ENCODE measurements at regions of chr7 and their contacts with region 1.

Region 1: GRCh38 chr7:30594549-30595435 is at the start of gene GARS1:
- DNase-seq: peak; percentile 81 to 95 (median 89)
- ATAC-seq: peak; percentile 83
- H3K4me3 ChIP-seq: peak within 1 kb of the TSS; percentile 72 to 87
- H3K4me3 Mint-ChIP-seq: peak within 1 kb of the TSS; percentile 99
- H3K27ac ChIP-seq: peak within 1 kb of the TSS; percentile 90 to 93
- H3K27ac Mint-ChIP-seq: peak within 1 kb of the TSS; percentile 99
- H3K4me1 ChIP-seq: peaks cover 36% of the 10 kb centered on the region
- H3K4me1 Mint-ChIP-seq: peaks cover 73% of the 10 kb centered on the region
- H3K27me3 ChIP-seq: no peaks in the 10 kb centered on the region
- H3K27me3 Mint-ChIP-seq: no peaks in the 10 kb centered on the region
- CTCF ChIP-seq: no peak
- total RNA-seq, gene GARS1: 119 to 121 TPM

Region 2: DNA sequence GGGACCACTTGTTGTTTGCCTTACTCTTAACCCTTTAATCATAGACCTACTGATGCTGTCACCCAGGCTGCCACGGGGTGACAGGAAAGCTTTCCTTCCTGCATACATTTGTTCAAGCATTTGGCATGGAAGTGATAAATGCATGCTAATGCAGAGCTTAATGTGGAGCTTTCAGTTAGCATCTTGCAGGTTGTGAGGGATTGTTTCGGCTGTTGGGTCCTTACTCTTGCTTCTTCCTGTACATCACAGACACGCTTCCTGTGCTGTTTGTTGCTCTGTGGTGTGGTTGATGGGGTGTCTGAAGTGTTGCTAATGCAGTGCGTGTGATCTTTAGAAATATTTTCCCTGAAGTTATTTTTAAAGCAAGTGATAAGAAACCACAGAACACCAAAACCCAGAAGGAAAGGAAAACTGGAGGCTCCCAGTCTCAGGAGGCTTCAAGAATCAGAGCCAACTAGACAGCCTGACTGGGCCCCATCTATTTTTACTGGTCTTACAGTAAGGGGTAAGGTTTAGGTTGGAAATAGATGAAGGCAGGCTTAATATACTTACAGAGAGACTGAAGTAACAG is 1257.2 kb before region 1 on chr7:
- CTCF ChIA-PET with region 1: no interaction called
- POLR2A ChIA-PET with region 1: interaction called, 4 read pairs
- intact Hi-C with region 1: loop called in 1 of 2 experiments (anchors 5 kb)
- DNase-seq: peak; percentile 19 to 87 (median 50)
- ATAC-seq: peak; percentile 91
- H3K4me3 ChIP-seq: peak overlapping the region in 1 of 2 experiments; percentile 16
- H3K4me3 Mint-ChIP-seq: peak overlapping the region; percentile 64
- H3K27ac ChIP-seq: peak overlapping the region; percentile 30 to 53
- H3K27ac Mint-ChIP-seq: peak overlapping the region; percentile 83
- H3K4me1 ChIP-seq: peaks cover 30% of the 10 kb centered on the region
- H3K4me1 Mint-ChIP-seq: peaks cover 49% of the 10 kb centered on the region
- H3K27me3 ChIP-seq: no peaks in the 10 kb centered on the region
- H3K27me3 Mint-ChIP-seq: no peaks in the 10 kb centered on the region
- CTCF ChIP-seq: no peak

Region 3: GRCh38 chr7:30080818-30081217 is 514.0 kb before region 1 on chr7:
- CTCF ChIA-PET with region 1: no interaction called
- POLR2A ChIA-PET with region 1: no interaction called
- intact Hi-C with region 1: no loop called
- DNase-seq: no peak
- ATAC-seq: no peak
- H3K4me3 ChIP-seq: no peak overlapping the region
- H3K4me3 Mint-ChIP-seq: no peak overlapping the region
- H3K27ac ChIP-seq: no peak overlapping the region
- H3K27ac Mint-ChIP-seq: no peak overlapping the region
- H3K4me1 ChIP-seq: no peaks in the 10 kb centered on the region
- H3K4me1 Mint-ChIP-seq: no peaks in the 10 kb centered on the region
- H3K27me3 ChIP-seq: no peaks in the 10 kb centered on the region
- H3K27me3 Mint-ChIP-seq: no peaks in the 10 kb centered on the region
- CTCF ChIP-seq: no peak

Region 4: GRCh38 chr7:30284298-30285066 is 310.3 kb before region 1 on chr7 and contains the start of gene ZNRF2:
- CTCF ChIA-PET with region 1: no interaction called
- POLR2A ChIA-PET with region 1: no interaction called
- intact Hi-C with region 1: loop called in 1 of 2 experiments (anchors 10 kb)
- DNase-seq: peak; percentile 97 to 100 (median 99)
- ATAC-seq: peak; percentile 83
- H3K4me3 ChIP-seq: peak within 1 kb of the TSS; percentile 45 to 75
- H3K4me3 Mint-ChIP-seq: peak within 1 kb of the TSS; percentile 87
- H3K27ac ChIP-seq: peak within 1 kb of the TSS; percentile 76 to 80
- H3K27ac Mint-ChIP-seq: peak within 1 kb of the TSS; percentile 92
- H3K4me1 ChIP-seq: peaks cover 23% of the 10 kb centered on the region
- H3K4me1 Mint-ChIP-seq: peaks cover 40% of the 10 kb centered on the region
- H3K27me3 ChIP-seq: no peaks in the 10 kb centered on the region
- H3K27me3 Mint-ChIP-seq: no peaks in the 10 kb centered on the region
- CTCF ChIP-seq: peak; percentile 46
- total RNA-seq, gene ZNRF2: 20.1 to 26.1 TPM

Region 5: GRCh38 chr7:30504347-30505173 is 90.2 kb before region 1 on chr7 and contains the start of gene GGCT:
- CTCF ChIA-PET with region 1: no interaction called
- POLR2A ChIA-PET with region 1: no interaction called
- intact Hi-C with region 1: loop called (anchors 1 to 2 kb)
- DNase-seq: peak; percentile 90 to 98 (median 96)
- ATAC-seq: peak; percentile 97
- H3K4me3 ChIP-seq: peak within 1 kb of the TSS; percentile 80 to 98
- H3K4me3 Mint-ChIP-seq: peak within 1 kb of the TSS; percentile 95
- H3K27ac ChIP-seq: peak within 1 kb of the TSS; percentile 50 to 70
- H3K27ac Mint-ChIP-seq: peak within 1 kb of the TSS; percentile 94
- H3K4me1 ChIP-seq: peaks cover 23% of the 10 kb centered on the region
- H3K4me1 Mint-ChIP-seq: peaks cover 39% of the 10 kb centered on the region
- H3K27me3 ChIP-seq: no peaks in the 10 kb centered on the region
- H3K27me3 Mint-ChIP-seq: no peaks in the 10 kb centered on the region
- CTCF ChIP-seq: no peak
- total RNA-seq, gene GGCT: 5.9 to 6.1 TPM

Region 6: GRCh38 chr7:31027161-31027965 is 432.6 kb after region 1 on chr7:
- CTCF ChIA-PET with region 1: no interaction called
- POLR2A ChIA-PET with region 1: no interaction called
- intact Hi-C with region 1: no loop called
- DNase-seq: peak in 1 of 9 experiments; percentile 10
- ATAC-seq: no peak
- H3K4me3 ChIP-seq: no peak overlapping the region
- H3K4me3 Mint-ChIP-seq: no peak overlapping the region
- H3K27ac ChIP-seq: no peak overlapping the region
- H3K27ac Mint-ChIP-seq: no peak overlapping the region
- H3K4me1 ChIP-seq: peaks cover 16% of the 10 kb centered on the region
- H3K4me1 Mint-ChIP-seq: peaks cover 17% of the 10 kb centered on the region
- H3K27me3 ChIP-seq: no peaks in the 10 kb centered on the region
- H3K27me3 Mint-ChIP-seq: peaks cover 5% of the 10 kb centered on the region
- CTCF ChIP-seq: no peak

Region 7: GRCh38 chr7:32495298-32496176 is 1900.7 kb after region 1 on chr7 and contains the start of gene AVL9:
- CTCF ChIA-PET with region 1: no interaction called
- POLR2A ChIA-PET with region 1: no interaction called
- intact Hi-C with region 1: loop called in 1 of 2 experiments (anchors 10 kb)
- DNase-seq: peak; percentile 98 to 99 (median 99)
- ATAC-seq: peak; percentile 89
- H3K4me3 ChIP-seq: peak within 1 kb of the TSS; percentile 66 to 87
- H3K4me3 Mint-ChIP-seq: peak within 1 kb of the TSS; percentile 97
- H3K27ac ChIP-seq: peak within 1 kb of the TSS; percentile 95 to 99
- H3K27ac Mint-ChIP-seq: peak within 1 kb of the TSS; percentile 96
- H3K4me1 ChIP-seq: peaks cover 31% of the 10 kb centered on the region
- H3K4me1 Mint-ChIP-seq: peaks cover 42% of the 10 kb centered on the region
- H3K27me3 ChIP-seq: no peaks in the 10 kb centered on the region
- H3K27me3 Mint-ChIP-seq: no peaks in the 10 kb centered on the region
- CTCF ChIP-seq: no peak
- total RNA-seq, gene AVL9: 22.4 to 24.7 TPM